Psoas muscle (tissue), 8 donors: ENCODE measurements at regions of chr7 and their contacts with region 1.

Region 1: DNA sequence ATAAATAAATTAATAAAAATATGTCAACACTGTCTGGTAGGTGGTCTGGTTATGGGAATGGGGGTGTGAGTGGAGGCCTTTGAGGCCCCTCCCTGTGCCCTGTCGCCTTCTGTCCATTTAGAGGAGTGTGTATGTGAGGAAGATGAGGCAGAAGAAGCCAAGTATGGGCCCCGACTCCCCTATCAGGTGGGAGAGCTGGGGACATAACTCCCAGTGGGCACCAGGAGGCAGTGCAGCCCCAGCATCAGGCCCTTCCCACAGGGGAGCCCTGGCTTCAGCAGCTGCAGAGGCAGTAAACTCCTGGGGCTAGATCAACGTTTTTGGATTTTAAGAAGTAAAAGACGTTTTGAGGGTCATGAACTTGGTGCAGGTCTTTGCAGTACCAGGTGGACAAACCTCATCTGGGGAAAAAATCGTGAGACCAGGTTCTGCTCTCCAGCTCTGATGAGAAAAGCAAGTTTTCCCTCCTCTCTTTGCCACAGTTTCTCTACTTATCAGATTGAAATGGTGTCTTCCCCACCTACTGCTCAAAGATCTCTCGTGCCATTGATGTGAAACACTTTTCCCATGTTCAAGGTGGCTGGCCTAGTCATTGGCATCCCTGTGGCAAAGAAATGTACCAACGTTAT is 167.8 kb upstream of the EEPD1 start:
- DNase-seq: peak; percentile 79 to 90
- ATAC-seq: peak; percentile 89 to 96 (median 91)
- H3K4me3 ChIP-seq: no peak overlapping the region
- H3K27ac ChIP-seq: no peak overlapping the region
- H3K4me1 ChIP-seq: peaks cover 19% of the 10 kb centered on the region
- H3K27me3 ChIP-seq: no peaks in the 10 kb centered on the region
- CTCF ChIP-seq: peak; percentile 90

Region 2: DNA sequence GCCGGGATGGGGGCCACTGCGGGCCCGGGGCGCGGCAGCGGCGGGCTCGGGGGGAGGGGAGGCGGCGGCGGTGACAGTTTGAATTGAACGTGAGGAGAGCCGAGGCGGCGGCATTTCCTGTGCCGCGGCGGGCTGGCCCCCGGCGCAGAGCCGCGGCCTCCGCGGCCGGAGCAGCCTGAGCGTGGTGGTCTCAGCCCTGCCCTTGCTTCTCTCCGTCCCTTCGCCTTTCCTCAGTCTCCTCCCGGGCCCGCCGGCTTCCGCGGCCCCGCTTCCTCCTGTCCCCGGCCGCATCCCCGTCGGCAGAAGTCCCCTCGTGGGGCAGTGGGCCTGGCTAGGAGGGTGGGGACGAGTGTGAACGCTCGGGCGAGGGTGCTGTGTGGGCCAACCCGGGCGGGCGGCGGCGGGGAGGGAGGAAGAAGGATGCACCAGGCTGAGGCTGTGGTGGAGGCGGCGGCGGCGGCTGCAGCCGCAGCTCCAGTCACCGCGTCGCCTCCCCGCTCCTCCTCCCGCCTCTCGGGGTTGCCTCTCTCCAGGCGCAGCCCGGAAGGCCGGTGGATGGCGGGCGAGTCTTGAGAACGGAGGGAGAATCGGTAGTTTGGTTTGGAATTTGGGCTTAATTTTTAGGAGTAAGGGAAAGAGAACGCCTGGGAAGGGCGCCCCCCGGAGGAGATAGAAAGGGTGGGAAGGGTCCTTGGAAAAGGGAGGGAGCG is 183.7 kb before region 1 on chr7:
- intact Hi-C with region 1: no loop called
- DNase-seq: peak; percentile 75 to 85
- ATAC-seq: peak; percentile 40 to 56 (median 44)
- H3K4me3 ChIP-seq: peak overlapping the region; percentile 79
- H3K27ac ChIP-seq: peak overlapping the region; percentile 92
- H3K4me1 ChIP-seq: peaks cover 35% of the 10 kb centered on the region
- H3K27me3 ChIP-seq: no peaks in the 10 kb centered on the region
- CTCF ChIP-seq: peak; percentile 45

Region 3: DNA sequence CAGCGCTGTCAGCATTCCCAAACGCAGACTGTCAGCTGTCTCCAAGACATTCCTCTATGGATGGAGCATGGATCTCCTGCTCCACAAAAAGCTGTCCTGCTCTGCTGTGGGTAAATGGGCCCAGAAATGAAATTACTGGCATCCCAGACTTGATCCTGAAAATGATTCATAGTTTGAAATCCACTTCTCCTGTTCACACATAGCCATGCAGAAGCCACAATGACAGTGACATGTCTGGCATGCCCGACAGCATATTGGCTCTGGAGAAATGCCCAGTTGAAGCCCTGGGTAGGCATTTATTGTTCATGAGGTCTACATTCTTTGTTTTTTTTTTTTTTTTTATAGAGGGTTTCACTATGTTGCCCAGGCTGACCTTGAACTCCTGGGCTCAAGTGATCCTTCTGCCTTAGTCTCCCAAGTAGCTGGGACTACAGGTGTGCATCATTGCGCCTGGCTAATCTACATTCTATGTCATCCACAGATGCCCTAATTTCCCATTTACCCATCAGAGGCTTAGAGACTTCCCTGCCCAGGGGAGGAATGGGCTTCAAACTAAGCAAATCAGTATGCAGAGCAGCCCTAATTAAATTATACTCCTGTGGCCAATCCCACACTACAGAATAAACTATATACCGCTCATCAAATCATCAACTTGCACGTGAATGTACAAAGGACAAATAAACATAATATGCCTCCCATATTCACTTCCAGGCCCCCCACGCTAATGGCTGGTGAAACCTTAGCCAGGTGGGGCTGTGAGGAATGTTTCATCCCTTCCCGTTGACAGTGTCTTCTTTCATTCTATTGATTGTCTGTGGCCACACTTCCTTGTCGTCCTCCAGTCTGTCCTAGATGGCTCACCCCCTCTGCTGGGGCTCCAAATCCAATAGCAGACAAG is 106.0 kb after region 1 on chr7:
- intact Hi-C with region 1: loop called (anchors 5 to 10 kb)
- DNase-seq: no peak
- ATAC-seq: peak in 3 of 4 donors; percentile 19 to 67 (median 58)
- H3K4me3 ChIP-seq: no peak overlapping the region
- H3K27ac ChIP-seq: no peak overlapping the region
- H3K4me1 ChIP-seq: no peaks in the 10 kb centered on the region
- H3K27me3 ChIP-seq: no peaks in the 10 kb centered on the region
- CTCF ChIP-seq: no peak

Region 4: GRCh38 chr7:36096460-36097095 is 111.3 kb after region 1 on chr7:
- intact Hi-C with region 1: loop called (anchors 5 to 10 kb)
- DNase-seq: no peak
- ATAC-seq: peak; percentile 58 to 86 (median 72)
- H3K4me3 ChIP-seq: no peak overlapping the region
- H3K27ac ChIP-seq: no peak overlapping the region
- H3K4me1 ChIP-seq: peaks cover 9% of the 10 kb centered on the region
- H3K27me3 ChIP-seq: no peaks in the 10 kb centered on the region
- CTCF ChIP-seq: no peak

Region 5: GRCh38 chr7:36110584-36110983 is 125.3 kb after region 1 on chr7:
- intact Hi-C with region 1: loop called in 1 of 2 experiments (anchors 5 kb)
- DNase-seq: no peak
- ATAC-seq: no peak
- H3K4me3 ChIP-seq: no peak overlapping the region
- H3K27ac ChIP-seq: no peak overlapping the region
- H3K4me1 ChIP-seq: peaks cover 5% of the 10 kb centered on the region
- H3K27me3 ChIP-seq: no peaks in the 10 kb centered on the region
- CTCF ChIP-seq: no peak

Region 6: DNA sequence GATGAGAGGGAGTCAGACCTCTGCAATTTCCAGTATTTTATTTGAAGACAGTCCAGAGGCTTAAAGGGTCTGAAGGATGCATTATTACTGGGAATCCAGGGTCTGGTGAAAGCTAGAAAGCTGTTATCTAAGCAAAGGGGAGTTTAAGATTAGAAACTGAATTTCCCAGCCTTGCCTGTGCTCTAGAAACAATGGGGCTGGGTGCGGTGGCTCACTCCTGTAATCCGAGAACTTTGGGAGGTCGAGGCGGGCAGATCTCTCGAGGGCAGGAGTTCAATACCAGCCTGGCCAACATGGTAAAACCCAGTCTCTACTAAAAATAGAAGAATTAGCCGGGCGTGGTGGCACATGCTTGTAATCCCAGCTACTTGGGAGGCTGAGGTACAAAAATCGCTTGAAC is 332.9 kb after region 1 on chr7:
- intact Hi-C with region 1: loop called (anchors 2 kb)
- DNase-seq: no peak
- ATAC-seq: no peak
- H3K4me3 ChIP-seq: no peak overlapping the region
- H3K27ac ChIP-seq: no peak overlapping the region
- H3K4me1 ChIP-seq: no peaks in the 10 kb centered on the region
- H3K27me3 ChIP-seq: no peaks in the 10 kb centered on the region
- CTCF ChIP-seq: no peak